Activated CD8-positive, alpha-beta T cell treated with anti-CD3 and anti-CD28 coated beads for 36 hours (primary cell): ENCODE measurements at regions of chr15 and their contacts with region 1.

Region 1: DNA sequence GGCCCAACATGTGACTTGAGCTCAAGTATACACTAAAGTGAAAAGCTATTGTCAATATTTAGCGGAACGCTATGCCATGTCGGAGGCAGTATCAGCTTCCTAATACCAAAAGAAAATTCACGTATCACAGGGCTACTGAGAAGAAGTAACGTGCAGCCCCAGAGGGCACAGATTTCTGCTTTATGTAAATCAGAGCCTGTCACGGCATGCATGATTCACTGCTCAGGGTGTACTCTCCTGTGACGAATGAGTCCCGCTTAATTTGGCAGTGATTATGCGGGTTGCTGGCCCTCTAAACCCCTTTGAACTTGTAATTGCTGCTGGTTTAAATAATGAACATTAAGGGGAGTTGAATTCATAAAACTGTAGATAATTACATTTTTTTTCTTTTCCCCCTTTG is 85.3 kb downstream of the MEIS2 start:
- DNase-seq: no peak
- ATAC-seq: no peak
- H3K4me3 Mint-ChIP-seq: no peak overlapping the region
- H3K27ac Mint-ChIP-seq: no peak overlapping the region
- H3K4me1 Mint-ChIP-seq: no peaks in the 10 kb centered on the region
- H3K27me3 Mint-ChIP-seq: no peaks in the 10 kb centered on the region
- CTCF ChIP-seq: no peak

Region 2: GRCh38 chr15:36951731-36952247 is 63.2 kb before region 1 on chr15:
- CTCF ChIA-PET with region 1: no interaction called
- POLR2A ChIA-PET with region 1: no interaction called
- intact Hi-C with region 1: loop called (anchors 10 kb)
- DNase-seq: no peak
- ATAC-seq: no peak
- H3K4me3 Mint-ChIP-seq: no peak overlapping the region
- H3K27ac Mint-ChIP-seq: no peak overlapping the region
- H3K4me1 Mint-ChIP-seq: no peaks in the 10 kb centered on the region
- H3K27me3 Mint-ChIP-seq: peaks cover 3% of the 10 kb centered on the region
- CTCF ChIP-seq: no peak